Psoas muscle (tissue), 8 donors: ENCODE measurements at regions of chr14 and their contacts with region 1.

Region 1: GRCh38 chr14:98711453-98711852 is 560.5 kb downstream of the BCL11B start:
- DNase-seq: no peak
- ATAC-seq: no peak
- H3K4me3 ChIP-seq: no peak overlapping the region
- H3K27ac ChIP-seq: no peak overlapping the region
- H3K4me1 ChIP-seq: no peaks in the 10 kb centered on the region
- H3K27me3 ChIP-seq: no peaks in the 10 kb centered on the region
- CTCF ChIP-seq: no peak

Region 2: DNA sequence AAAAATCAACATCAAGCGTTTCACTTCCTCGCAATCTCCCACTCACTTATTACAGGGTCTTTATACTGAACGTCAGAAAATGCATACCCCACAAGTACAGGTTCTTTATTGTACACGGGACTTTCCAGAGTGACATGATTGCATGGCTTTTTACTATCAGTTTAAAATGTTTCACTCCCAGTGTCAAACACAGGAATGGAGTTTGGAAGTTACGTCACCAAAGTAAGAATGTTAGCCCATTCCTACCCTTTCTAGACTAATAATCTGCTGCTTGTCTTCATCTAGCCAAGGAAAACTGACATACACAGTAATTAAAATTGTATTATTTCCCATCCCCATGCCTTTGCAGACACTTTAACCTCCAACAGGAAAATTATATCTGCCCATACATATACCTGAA is 63.7 kb before region 1 on chr14:
- intact Hi-C with region 1: loop called in 1 of 2 experiments (anchors 2 kb)
- DNase-seq: no peak
- ATAC-seq: no peak
- H3K4me3 ChIP-seq: no peak overlapping the region
- H3K27ac ChIP-seq: no peak overlapping the region
- H3K4me1 ChIP-seq: no peaks in the 10 kb centered on the region
- H3K27me3 ChIP-seq: no peaks in the 10 kb centered on the region
- CTCF ChIP-seq: no peak

Region 3: GRCh38 chr14:98670609-98671008 is 40.8 kb before region 1 on chr14:
- intact Hi-C with region 1: no loop called
- DNase-seq: no peak
- ATAC-seq: no peak
- H3K4me3 ChIP-seq: no peak overlapping the region
- H3K27ac ChIP-seq: no peak overlapping the region
- H3K4me1 ChIP-seq: no peaks in the 10 kb centered on the region
- H3K27me3 ChIP-seq: peaks cover 0 to 4% (median 0%) of the 10 kb centered on the region in 3 donors
- CTCF ChIP-seq: no peak